Mammary epithelial cell (primary cell): ENCODE measurements at regions of chr1 and their contacts with region 1.

Region 1: DNA sequence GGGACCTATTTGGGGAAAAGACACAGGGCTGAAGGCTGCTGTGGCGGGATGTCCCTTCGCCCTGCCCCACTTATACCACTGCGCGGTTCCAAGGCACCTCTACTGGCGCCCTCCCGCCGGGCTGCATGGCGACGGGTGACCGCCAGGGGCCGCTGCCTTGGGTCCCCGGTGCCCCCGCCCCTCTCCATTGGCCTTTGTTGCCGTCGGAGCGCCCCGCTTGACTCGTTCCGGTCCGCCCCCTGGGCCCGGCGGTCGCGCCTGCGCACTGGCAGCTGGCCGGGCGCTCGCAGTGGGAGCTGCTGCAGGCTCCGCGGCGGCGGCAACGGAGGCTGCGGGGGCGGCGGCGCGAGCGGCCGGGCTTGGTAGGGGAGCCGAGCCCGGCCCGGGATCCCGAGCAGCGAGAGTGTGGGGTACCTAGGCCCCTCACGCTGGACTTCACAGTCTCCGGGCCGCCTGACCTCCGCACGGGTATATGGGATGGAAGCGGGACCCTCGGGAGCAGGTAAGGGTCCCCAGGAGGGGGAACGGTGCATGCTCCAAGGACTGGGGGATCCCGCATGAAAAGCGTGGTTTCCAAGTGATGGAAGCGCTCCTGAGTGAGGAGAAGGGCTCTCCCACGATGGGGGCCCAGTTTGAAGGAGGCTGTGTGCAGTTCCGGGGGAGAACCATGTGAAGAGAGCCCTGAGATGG is at the start of gene AGO1:
- DNase-seq: peak; percentile 88
- H3K4me3 ChIP-seq: peak within 1 kb of the TSS; percentile 67 to 85 (median 73)
- H3K27ac ChIP-seq: peak within 1 kb of the TSS; percentile 17
- H3K4me1 ChIP-seq: peaks cover 6% of the 10 kb centered on the region
- H3K27me3 ChIP-seq: no peaks in the 10 kb centered on the region
- CTCF ChIP-seq: peak; percentile 87 to 88
- total RNA-seq, gene AGO1: 20.3 to 21.7 TPM

Region 2: DNA sequence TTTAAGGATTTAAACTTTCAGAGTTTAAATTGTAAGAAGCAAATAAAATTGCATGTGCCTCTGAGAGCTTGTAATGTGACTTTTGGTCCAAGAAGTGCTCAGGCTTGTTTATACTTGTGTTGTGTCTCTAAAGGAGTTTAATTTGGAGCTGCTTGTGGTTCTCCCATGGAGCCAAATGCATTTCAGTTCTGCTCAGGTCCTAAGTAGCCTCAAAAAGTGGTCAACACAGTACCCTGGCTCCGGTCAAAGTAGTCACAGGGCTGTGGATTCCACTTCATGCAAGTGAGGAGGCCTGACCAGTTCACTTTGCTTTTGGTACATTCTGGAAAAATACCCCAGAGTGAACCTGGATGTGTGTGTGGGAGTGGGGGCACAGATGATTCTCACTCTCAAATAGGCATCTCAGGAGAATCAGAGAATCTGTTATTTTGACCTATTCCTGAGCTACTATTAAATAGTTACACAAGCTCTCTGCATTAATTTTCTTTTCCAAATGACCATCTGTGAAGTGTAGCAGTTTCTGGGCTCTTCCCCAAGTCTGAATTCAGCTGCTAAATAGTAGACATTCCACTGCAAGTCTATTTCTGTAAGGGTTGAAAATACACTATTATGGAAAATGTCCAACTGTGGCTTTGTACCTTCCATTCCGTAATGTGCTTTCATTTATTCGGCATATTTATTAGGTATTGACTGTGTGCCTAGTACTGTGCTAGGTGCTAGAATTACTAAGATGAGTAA is 31.8 kb before region 1 on chr1:
- CTCF ChIA-PET with region 1: interaction called, 11 read pairs
- dilution Hi-C with region 1: no loop called
- in situ Hi-C with region 1: no loop called
- intact Hi-C with region 1: no loop called
- DNase-seq: no peak
- H3K4me3 ChIP-seq: no peak overlapping the region
- H3K27ac ChIP-seq: no peak overlapping the region
- H3K4me1 ChIP-seq: no peaks in the 10 kb centered on the region
- H3K27me3 ChIP-seq: no peaks in the 10 kb centered on the region
- CTCF ChIP-seq: no peak

Region 3: DNA sequence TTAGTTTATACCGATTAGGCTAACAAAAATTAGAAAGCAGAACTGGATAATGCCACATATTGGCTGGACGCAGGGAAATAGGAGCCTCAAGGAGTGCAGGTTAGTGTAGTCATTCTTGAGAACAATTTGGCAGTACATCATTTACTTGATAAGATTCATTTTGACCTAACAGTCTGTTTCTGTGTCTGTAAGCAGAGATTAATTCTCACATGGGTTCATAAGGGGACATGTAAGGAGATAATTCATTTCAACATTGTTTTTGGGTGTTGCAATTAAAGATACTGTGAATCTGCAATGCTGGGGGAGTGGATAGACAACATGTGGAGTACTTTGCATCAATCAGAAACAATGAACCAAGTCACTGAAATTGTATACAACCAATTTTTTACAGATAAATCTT is 79.9 kb after region 1 on chr1:
- CTCF ChIA-PET with region 1: interaction called, 20 read pairs
- dilution Hi-C with region 1: no loop called
- in situ Hi-C with region 1: no loop called
- intact Hi-C with region 1: no loop called
- DNase-seq: no peak
- H3K4me3 ChIP-seq: no peak overlapping the region
- H3K27ac ChIP-seq: no peak overlapping the region
- H3K4me1 ChIP-seq: no peaks in the 10 kb centered on the region
- H3K27me3 ChIP-seq: no peaks in the 10 kb centered on the region
- CTCF ChIP-seq: no peak

Region 4: DNA sequence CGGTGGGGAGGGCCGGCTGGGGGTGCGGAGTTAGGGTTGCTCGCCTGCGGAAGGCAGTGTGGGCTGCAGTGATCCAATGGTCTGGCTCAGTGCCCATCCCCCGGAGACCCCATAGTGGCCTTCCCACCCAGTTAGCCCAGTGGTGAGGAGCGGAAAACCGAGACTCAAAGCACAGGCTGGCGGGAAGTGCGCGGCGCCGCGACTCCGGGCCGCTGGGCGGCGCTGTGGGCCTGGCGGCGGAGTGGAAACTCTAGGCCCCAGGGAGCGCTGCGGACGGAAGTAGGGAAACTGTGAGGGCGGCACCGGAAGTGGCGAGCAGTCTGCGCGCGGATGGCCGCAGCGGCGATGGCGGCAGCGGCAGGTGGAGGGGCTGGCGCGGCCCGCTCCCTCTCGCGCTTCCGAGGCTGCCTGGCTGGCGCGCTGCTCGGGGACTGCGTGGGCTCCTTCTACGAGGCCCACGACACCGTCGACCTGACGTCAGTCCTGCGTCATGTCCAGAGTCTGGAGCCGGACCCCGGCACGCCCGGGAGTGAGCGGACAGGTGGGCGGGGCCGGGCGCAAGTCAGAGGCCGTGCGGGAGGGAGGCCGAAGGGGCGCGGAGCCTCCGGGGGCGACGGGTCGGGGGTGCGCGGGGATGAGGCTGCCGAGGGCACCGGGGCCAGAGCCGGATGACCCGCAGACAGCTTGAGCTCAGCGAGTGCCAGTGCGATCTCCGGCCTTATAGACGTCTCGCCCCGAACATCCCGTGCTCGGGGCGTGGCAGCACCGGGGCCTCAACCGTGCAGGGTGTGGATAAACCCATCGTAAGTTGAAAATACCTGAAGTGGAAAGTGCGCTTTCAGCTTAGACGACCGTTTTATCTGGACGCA is 205.7 kb after region 1 on chr1 and contains the start of gene ADPRS:
- CTCF ChIA-PET with region 1: no interaction called
- dilution Hi-C with region 1: no loop called
- in situ Hi-C with region 1: no loop called
- intact Hi-C with region 1: loop called (anchors 1 kb)
- DNase-seq: peak; percentile 83
- H3K4me3 ChIP-seq: peak within 1 kb of the TSS; percentile 79 to 96 (median 89)
- H3K27ac ChIP-seq: peak within 1 kb of the TSS; percentile 74
- H3K4me1 ChIP-seq: peaks cover 22% of the 10 kb centered on the region
- H3K27me3 ChIP-seq: no peaks in the 10 kb centered on the region
- CTCF ChIP-seq: peak; percentile 86 to 99
- total RNA-seq, gene ADPRS: 33.7 to 34.3 TPM